MCF 10A (cell line): ENCODE measurements at regions of chr17 and their contacts with region 1.

Region 1: DNA sequence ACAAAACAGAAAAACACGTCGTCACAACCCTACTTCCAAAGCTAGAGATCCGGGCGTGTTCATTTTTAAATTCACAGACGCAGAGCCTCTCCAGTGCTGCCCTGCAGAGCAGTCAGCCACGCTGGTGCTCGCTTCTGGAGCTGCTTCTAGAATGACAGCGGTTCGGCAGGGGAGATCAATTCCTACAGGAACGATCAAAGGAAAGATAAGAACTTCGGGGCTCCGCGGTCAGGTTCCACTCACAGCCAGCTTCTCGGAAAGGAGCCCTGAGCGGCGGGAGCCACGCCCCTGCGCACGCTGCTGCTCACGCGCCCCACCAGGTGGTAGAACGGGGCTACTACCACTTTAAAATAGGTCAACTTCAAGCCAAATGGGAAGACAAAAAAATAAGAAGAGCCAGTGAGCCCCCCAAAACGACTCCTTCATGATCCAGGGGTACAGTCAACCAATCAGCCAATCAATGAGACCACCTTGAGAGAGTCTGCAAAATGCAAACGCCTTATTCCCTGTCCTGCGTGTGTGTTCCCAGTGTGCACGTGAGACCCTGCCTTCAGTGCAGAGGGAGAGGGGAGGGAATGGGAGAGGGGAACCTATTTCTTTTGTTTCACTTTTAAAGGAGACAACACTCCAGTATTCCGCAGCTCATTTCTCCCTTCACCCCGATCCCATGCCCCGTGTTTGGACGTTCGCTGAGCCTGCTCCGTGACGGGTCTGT is 209.7 kb downstream of the RBFOX3 start:
- DNase-seq: peak; percentile 60
- H3K4me3 Mint-ChIP-seq: peak overlapping the region; percentile 63
- H3K27ac Mint-ChIP-seq: no peak overlapping the region
- H3K4me1 Mint-ChIP-seq: peaks cover 11% of the 10 kb centered on the region
- H3K27me3 Mint-ChIP-seq: peaks cover 78% of the 10 kb centered on the region
- CTCF ChIP-seq: peak; percentile 85

Region 2: DNA sequence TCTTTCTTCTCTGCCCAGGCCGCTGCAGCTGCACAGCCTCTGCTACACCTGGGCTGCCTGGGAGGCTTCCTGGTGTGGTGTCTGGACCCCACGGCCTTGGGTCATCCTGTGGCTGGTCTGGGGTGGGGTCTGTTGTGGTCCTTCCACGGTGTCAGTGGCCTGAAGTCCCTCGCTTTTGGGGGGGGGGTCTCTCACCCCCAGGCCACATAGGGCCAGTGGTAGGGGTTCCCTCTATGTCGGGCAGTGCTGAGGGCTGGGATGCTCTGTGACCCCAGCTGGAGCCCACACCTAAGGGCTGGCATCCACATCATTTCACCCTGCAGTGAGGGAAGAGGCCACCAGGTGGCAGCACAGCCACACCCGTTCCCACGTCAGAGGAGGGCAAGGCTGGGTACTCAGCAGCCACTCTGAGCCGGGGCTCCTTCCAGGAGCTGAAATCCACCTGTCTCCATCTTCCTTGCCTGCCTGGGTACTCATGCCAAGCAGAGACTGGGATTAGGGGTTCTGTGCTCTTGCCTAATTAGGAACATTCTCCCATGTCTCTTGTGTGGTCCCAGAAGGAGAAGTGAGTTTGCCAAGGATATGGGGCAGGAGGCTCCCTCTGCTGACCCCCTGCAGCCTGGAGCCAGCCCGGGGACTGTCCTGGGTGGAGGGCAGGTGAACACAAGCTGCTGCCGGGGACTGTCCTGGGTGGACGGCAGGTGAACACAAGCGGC is 313.6 kb before region 1 on chr17:
- CTCF ChIA-PET with region 1: interaction called, 273 read pairs
- POLR2A ChIA-PET with region 1: no interaction called
- intact Hi-C with region 1: no loop called
- DNase-seq: peak; percentile 70
- H3K4me3 Mint-ChIP-seq: no peak overlapping the region
- H3K27ac Mint-ChIP-seq: no peak overlapping the region
- H3K4me1 Mint-ChIP-seq: no peaks in the 10 kb centered on the region
- H3K27me3 Mint-ChIP-seq: peaks cover 7% of the 10 kb centered on the region
- CTCF ChIP-seq: peak; percentile 74

Region 3: DNA sequence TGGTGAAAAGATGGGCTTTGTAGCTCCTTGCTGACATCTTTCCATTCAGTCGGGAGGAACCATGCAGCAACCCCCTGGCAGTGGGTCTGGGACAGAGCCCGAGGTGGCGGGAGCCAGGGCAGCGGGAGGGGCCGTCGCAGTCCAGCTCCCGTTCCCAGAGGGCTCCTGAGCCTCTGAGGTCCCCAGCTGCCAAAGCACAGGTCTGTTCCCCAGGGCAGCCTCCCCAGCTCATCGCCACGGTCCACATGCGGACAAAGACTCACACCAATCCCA is 13.6 kb after region 1 on chr17:
- CTCF ChIA-PET with region 1: interaction called, 17 read pairs
- POLR2A ChIA-PET with region 1: no interaction called
- intact Hi-C with region 1: no loop called
- DNase-seq: no peak
- H3K4me3 Mint-ChIP-seq: no peak overlapping the region
- H3K27ac Mint-ChIP-seq: no peak overlapping the region
- H3K4me1 Mint-ChIP-seq: no peaks in the 10 kb centered on the region
- H3K27me3 Mint-ChIP-seq: peaks cover 61% of the 10 kb centered on the region
- CTCF ChIP-seq: no peak

Region 4: DNA sequence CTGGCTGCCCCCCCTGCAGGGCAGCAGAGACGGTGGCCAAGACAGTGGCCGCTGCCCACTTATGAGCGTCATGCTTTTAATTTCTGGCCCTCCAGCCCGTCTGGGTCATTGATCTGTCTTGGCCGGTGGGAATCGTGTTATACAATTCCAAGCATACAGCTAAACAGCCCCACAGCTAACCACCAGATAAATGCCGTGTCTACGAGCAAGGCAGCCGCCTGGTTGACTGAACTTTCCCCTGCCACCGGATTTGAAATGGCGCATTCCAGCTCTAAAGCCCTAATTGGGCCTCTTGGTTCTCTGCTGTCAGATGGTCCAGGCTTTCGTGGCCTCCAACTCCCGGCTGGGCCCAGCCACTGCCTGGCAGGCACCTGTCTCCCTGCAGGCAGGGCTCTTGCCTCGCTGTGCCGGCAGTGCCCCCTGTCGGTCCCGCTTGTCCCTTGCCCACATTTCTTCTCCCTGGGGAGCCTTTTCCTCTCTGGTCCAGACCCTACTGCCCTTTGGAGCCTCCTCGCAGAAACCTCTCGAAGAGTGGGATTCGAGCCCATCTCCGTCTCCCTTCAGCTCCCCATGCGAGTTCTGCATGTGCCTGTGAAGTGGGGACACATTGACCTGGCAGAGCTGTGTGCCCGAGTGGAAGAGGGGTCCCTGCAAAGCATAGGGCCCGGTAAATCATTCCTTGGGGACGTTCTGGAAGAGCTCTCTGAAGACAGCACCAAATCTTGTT is 211.5 kb after region 1 on chr17:
- CTCF ChIA-PET with region 1: interaction called, 3 read pairs
- POLR2A ChIA-PET with region 1: no interaction called
- intact Hi-C with region 1: loop called (anchors 5 kb)
- DNase-seq: peak; percentile 64
- H3K4me3 Mint-ChIP-seq: no peak overlapping the region
- H3K27ac Mint-ChIP-seq: no peak overlapping the region
- H3K4me1 Mint-ChIP-seq: no peaks in the 10 kb centered on the region
- H3K27me3 Mint-ChIP-seq: peaks cover 83% of the 10 kb centered on the region
- CTCF ChIP-seq: peak; percentile 70

Region 5: GRCh38 chr17:79707931-79708891 is 307.1 kb after region 1 on chr17:
- CTCF ChIA-PET with region 1: interaction called, 15 read pairs
- POLR2A ChIA-PET with region 1: no interaction called
- intact Hi-C with region 1: loop called (anchors 1 kb)
- DNase-seq: peak; percentile 43
- H3K4me3 Mint-ChIP-seq: no peak overlapping the region
- H3K27ac Mint-ChIP-seq: no peak overlapping the region
- H3K4me1 Mint-ChIP-seq: peaks cover 10% of the 10 kb centered on the region
- H3K27me3 Mint-ChIP-seq: peaks cover 10% of the 10 kb centered on the region
- CTCF ChIP-seq: peak; percentile 71